ENCODE measurements at regions of chr1 and their contacts with region 1.

Region 1: DNA sequence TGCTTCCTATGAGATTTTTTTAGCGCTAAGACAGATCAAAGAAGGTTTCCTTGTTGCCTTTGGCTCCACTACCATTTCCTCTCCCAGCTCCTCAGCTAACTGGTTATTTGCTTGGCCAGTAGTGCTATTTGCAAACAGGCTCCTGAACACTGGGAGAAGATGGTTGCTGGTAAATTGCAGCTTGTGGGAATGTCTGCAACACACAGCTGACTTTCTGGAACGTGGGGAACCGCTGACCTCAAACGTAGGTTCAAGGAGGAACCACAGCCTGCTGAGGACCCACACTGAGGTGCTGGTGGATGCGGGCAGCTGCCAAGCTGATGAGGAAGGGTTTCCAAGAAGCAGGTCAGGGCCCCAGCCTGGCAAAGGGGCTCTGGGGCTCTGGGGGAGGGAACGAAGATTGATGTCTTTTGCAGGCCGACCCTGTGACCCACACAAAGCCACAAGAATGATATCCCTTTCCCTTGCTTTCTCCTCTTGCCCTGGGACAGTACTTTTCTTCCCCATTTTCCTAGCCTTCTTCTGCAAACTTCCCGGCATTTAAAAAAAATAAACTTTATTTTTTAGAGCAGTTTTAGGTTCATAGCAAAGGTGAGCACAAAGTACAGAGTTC is 24.8 kb downstream of the GNG4 start:
- DNase-seq: no peak
- ATAC-seq: no peak
- H3K4me3 ChIP-seq: no peak overlapping the region
- H3K4me3 Mint-ChIP-seq: no peak overlapping the region
- H3K27ac ChIP-seq: no peak overlapping the region
- H3K27ac Mint-ChIP-seq: no peak overlapping the region
- H3K4me1 ChIP-seq: no peaks in the 10 kb centered on the region
- H3K4me1 Mint-ChIP-seq: no peaks in the 10 kb centered on the region
- H3K27me3 ChIP-seq: peaks cover 0 to 18% of the 10 kb centered on the region in 2 experiments
- H3K27me3 Mint-ChIP-seq: peaks cover 11 to 14% of the 10 kb centered on the region in 2 donors

Region 2: GRCh38 chr1:235588916-235589515 is 35.8 kb before region 1 on chr1:
- CTCF ChIA-PET with region 1: no interaction called
- POLR2A ChIA-PET with region 1: no interaction called
- DNase-seq: no peak
- ATAC-seq: no peak
- H3K4me3 ChIP-seq: peak overlapping the region in 1 of 2 donors; percentile 5
- H3K4me3 Mint-ChIP-seq: no peak overlapping the region
- H3K27ac ChIP-seq: no peak overlapping the region
- H3K27ac Mint-ChIP-seq: no peak overlapping the region
- H3K4me1 ChIP-seq: peaks cover 0 to 5% of the 10 kb centered on the region in 2 experiments
- H3K4me1 Mint-ChIP-seq: peaks cover 5 to 7% (median 5%) of the 10 kb centered on the region in 3 donors
- H3K27me3 ChIP-seq: peaks cover 0 to 28% of the 10 kb centered on the region in 2 experiments
- H3K27me3 Mint-ChIP-seq: peaks cover 9 to 21% of the 10 kb centered on the region in 2 donors

Region 3: GRCh38 chr1:235657747-235658526 is 33.1 kb after region 1 on chr1:
- CTCF ChIA-PET with region 1: no interaction called
- POLR2A ChIA-PET with region 1: interaction called in 1 of 2 experiments, 11 read pairs
- DNase-seq: no peak
- ATAC-seq: no peak
- H3K4me3 ChIP-seq: no peak overlapping the region
- H3K4me3 Mint-ChIP-seq: no peak overlapping the region
- H3K27ac ChIP-seq: no peak overlapping the region
- H3K27ac Mint-ChIP-seq: no peak overlapping the region
- H3K4me1 ChIP-seq: no peaks in the 10 kb centered on the region
- H3K4me1 Mint-ChIP-seq: no peaks in the 10 kb centered on the region
- H3K27me3 ChIP-seq: no peaks in the 10 kb centered on the region
- H3K27me3 Mint-ChIP-seq: peaks cover 18 to 23% of the 10 kb centered on the region in 2 donors

Region 4: DNA sequence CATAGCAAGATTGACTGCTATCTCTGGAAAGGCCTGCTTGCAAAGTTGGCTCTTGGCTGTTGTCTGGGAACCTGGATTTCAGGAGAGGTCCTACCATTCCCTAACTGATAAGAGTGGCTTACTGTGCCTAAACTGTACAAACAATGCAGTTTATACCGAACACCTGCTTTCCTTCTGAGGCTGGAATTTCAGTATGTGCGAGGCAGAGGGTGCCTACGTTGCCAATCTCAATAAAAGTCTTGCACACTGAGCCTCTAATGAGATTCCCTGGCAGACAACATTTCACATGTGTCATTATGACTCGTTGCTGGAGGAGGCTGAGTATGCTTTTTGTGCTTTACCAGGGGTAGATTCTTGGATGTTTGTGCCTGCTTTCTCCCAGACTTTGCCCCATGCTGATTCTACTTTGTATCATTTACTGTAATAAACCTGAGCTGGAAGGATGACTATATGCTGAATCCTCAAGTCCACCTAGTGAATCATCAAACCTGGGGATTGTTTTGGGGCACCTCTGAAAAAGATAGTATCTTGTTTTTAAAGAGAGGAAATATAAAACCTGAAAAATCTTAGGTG is 83.6 kb after region 1 on chr1:
- CTCF ChIA-PET with region 1: no interaction called
- POLR2A ChIA-PET with region 1: interaction called in 1 of 2 experiments, 10 read pairs
- DNase-seq: no peak
- ATAC-seq: no peak
- H3K4me3 ChIP-seq: no peak overlapping the region
- H3K4me3 Mint-ChIP-seq: no peak overlapping the region
- H3K27ac ChIP-seq: no peak overlapping the region
- H3K27ac Mint-ChIP-seq: no peak overlapping the region
- H3K4me1 ChIP-seq: no peaks in the 10 kb centered on the region
- H3K4me1 Mint-ChIP-seq: no peaks in the 10 kb centered on the region
- H3K27me3 ChIP-seq: no peaks in the 10 kb centered on the region
- H3K27me3 Mint-ChIP-seq: no peaks in the 10 kb centered on the region

Region 5: DNA sequence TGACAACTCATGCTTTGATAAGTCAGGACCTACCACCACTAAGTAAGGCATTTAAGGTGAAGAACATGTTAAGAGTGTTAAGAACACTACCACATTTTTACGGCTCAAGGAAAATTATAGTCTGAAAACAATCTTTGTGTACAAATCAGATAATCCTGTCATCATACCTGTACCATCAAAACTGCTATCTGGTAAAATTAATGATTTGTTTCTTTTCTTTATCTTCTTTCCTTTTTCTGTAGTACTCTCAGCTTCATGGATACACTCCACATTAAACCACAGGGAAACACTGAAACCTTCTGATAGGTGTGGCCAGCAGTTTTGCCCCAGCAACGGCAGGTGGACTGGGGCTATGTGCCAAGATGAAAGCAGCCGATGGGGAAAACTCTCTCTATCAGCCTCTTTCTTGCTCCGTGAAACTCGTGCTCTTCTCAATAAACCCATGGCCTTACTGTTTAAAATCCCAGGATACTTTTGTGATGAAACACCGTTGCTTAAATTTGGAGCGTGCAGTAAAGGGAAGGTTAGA is 166.8 kb after region 1 on chr1:
- CTCF ChIA-PET with region 1: no interaction called
- POLR2A ChIA-PET with region 1: interaction called in 1 of 2 experiments, 13 read pairs
- DNase-seq: no peak
- ATAC-seq: no peak
- H3K4me3 ChIP-seq: no peak overlapping the region
- H3K4me3 Mint-ChIP-seq: no peak overlapping the region
- H3K27ac ChIP-seq: no peak overlapping the region
- H3K27ac Mint-ChIP-seq: no peak overlapping the region
- H3K4me1 ChIP-seq: no peaks in the 10 kb centered on the region
- H3K4me1 Mint-ChIP-seq: peaks cover 0 to 1% (median 0%) of the 10 kb centered on the region in 3 donors
- H3K27me3 ChIP-seq: no peaks in the 10 kb centered on the region
- H3K27me3 Mint-ChIP-seq: no peaks in the 10 kb centered on the region

Measured in T-cell (primary cell).